T-cell (primary cell): ENCODE measurements at regions of chr7 and their contacts with region 1.

Region 1: DNA sequence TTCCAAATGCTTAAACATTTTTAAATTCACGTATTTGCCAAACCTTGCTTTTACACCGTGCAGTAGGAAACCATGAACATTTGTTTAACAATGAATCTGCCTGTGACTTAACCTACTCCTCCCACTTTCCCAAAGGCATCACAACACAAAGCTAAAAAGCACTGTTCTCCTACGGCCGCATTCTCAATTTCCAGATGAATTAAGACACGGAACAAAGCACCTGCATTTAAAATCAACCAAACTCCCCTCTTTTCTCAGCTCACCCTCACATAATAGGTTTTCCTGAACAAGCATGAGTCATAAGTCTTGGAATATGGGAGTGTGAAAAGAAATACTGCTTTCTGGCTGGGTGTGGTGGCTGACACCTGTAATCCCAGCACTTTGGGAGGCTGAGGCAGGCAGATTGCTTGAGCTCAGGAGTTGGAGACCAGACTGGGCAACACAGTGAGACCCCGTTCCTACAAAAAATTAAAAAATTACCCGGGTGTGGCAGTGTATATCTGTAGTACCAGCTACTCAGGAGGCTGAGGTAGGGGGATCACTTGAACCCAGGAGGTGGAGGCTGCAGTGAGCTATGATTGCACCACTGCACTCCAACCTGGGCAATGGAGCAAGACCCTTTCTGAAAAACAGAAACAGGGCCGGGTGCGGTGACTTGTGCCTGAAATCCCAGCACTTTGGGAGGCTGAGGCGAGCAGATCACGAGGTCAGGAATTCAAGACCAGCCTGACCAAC is 51.7 kb upstream of the CYTH3 start:
- DNase-seq: no peak
- ATAC-seq: no peak
- H3K4me3 ChIP-seq: no peak overlapping the region
- H3K4me3 Mint-ChIP-seq: no peak overlapping the region
- H3K27ac ChIP-seq: no peak overlapping the region
- H3K27ac Mint-ChIP-seq: no peak overlapping the region
- H3K4me1 ChIP-seq: peaks cover 0 to 3% of the 10 kb centered on the region in 2 experiments
- H3K4me1 Mint-ChIP-seq: peaks cover 4 to 6% (median 4%) of the 10 kb centered on the region in 3 donors
- H3K27me3 ChIP-seq: no peaks in the 10 kb centered on the region
- H3K27me3 Mint-ChIP-seq: peaks cover 2 to 4% of the 10 kb centered on the region in 2 donors

Region 2: GRCh38 chr7:5403442-5403841 is 920.7 kb before region 1 on chr7:
- CTCF ChIA-PET with region 1: no interaction called
- POLR2A ChIA-PET with region 1: interaction called in 1 of 2 experiments, 10 read pairs
- DNase-seq: no peak
- ATAC-seq: no peak
- H3K4me3 ChIP-seq: no peak overlapping the region
- H3K4me3 Mint-ChIP-seq: no peak overlapping the region
- H3K27ac ChIP-seq: no peak overlapping the region
- H3K27ac Mint-ChIP-seq: no peak overlapping the region
- H3K4me1 ChIP-seq: no peaks in the 10 kb centered on the region
- H3K4me1 Mint-ChIP-seq: peaks cover 0 to 6% (median 0%) of the 10 kb centered on the region in 3 donors
- H3K27me3 ChIP-seq: peaks cover 0 to 30% of the 10 kb centered on the region in 2 experiments
- H3K27me3 Mint-ChIP-seq: peaks cover 4 to 5% of the 10 kb centered on the region in 2 donors

Region 3: DNA sequence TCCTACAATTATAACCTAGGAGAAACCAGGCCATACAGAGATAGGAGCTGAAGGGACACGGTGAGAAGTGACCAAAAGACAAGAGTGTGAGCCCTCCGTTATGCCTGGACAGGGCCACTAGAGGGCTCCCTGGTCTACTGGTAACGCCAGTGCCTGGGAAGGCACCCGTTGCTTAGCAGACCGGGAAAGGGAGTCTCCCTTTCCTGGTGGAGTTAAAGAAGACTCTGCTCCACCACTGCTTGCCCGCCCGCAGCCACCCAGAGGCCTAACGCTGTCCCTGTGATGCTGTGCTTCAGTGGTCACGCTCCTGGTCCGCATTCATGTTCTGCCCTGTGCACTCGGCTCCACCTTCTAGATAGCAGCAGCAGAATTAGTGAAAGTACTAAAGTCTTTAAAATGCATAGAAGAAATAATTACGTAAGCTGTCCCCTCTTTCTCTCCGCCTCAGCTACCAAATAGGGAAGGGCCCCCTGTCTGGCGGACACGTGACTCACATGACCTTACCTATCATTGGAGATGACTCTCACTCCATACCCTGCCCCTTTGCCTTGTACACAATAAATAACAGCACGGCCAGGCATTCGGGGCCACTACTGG is 192.4 kb after region 1 on chr7:
- CTCF ChIA-PET with region 1: no interaction called
- POLR2A ChIA-PET with region 1: no interaction called
- DNase-seq: peak in 33 of 35 experiments; percentile 17 to 74 (median 50)
- ATAC-seq: peak; percentile 78 to 85 (median 80)
- H3K4me3 ChIP-seq: peak overlapping the region; percentile 31 to 66
- H3K4me3 Mint-ChIP-seq: peak overlapping the region; percentile 62 to 79 (median 69)
- H3K27ac ChIP-seq: no peak overlapping the region
- H3K27ac Mint-ChIP-seq: no peak overlapping the region
- H3K4me1 ChIP-seq: peaks cover 0 to 7% of the 10 kb centered on the region in 2 experiments
- H3K4me1 Mint-ChIP-seq: peaks cover 6 to 11% (median 8%) of the 10 kb centered on the region in 3 donors
- H3K27me3 ChIP-seq: peaks cover 0 to 29% of the 10 kb centered on the region in 2 experiments
- H3K27me3 Mint-ChIP-seq: peaks cover 4 to 10% of the 10 kb centered on the region in 2 donors